Tibial artery (tissue), 4 donors: ENCODE measurements at regions of chr20 and their contacts with region 1.

Region 1: GRCh38 chr20:9616833-9617489 is 102.6 kb downstream of the LAMP5 start:
- DNase-seq: peak in 1 of 2 donors; percentile 37
- H3K4me3 ChIP-seq: no peak overlapping the region
- H3K27ac ChIP-seq: no peak overlapping the region
- H3K4me1 ChIP-seq: peaks cover 0 to 5% (median 2%) of the 10 kb centered on the region in 4 donors
- H3K27me3 ChIP-seq: peaks cover 0 to 4% of the 10 kb centered on the region in 2 donors
- CTCF ChIP-seq: peak; percentile 74 to 81

Region 2: DNA sequence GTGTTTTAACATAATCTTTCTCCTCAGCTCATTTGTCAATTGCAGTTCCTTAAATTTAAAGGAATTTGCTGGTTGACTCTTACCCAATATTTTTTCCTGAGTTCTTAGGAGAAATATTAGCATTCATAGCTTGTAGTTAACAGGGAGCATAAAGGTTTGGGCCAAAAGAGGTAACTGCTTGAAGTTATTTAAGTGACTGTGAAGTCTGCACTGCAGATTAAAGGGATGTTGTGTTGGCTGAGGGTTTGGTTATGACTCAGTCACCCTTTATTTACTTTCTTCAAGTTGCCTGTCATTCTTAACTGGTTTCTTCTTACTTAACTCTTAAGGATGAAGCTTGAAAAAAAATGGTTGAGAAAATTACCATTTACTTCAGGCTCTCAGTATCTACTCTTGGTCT is 322.9 kb before region 1 on chr20:
- intact Hi-C with region 1: no loop called
- DNase-seq: no peak
- H3K4me3 ChIP-seq: no peak overlapping the region
- H3K27ac ChIP-seq: no peak overlapping the region
- H3K4me1 ChIP-seq: peaks cover 0 to 12% (median 0%) of the 10 kb centered on the region in 4 donors
- H3K27me3 ChIP-seq: no peaks in the 10 kb centered on the region
- CTCF ChIP-seq: no peak

Region 3: GRCh38 chr20:9532069-9532838 is 84.7 kb before region 1 on chr20:
- intact Hi-C with region 1: no loop called
- DNase-seq: no peak
- H3K4me3 ChIP-seq: no peak overlapping the region
- H3K27ac ChIP-seq: no peak overlapping the region
- H3K4me1 ChIP-seq: no peaks in the 10 kb centered on the region
- H3K27me3 ChIP-seq: no peaks in the 10 kb centered on the region
- CTCF ChIP-seq: no peak

Region 4: DNA sequence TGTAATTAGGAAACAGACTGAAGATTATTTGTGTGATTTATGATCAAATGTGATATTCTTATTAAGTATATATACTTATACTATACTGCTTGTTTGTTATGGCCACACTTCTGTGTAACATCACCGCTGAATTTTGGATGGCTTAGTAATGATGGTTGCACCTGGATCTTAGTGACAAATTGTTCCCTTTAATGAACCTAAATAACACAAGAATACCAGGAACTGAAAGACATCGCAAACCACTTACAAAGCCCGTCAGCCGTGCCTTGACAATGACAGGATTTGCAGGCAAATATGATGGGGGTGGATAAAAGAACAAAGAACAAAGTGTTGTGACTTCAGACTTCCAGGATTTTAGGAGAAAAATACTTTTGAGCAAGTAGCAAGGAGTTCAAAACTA is 35.5 kb before region 1 on chr20:
- intact Hi-C with region 1: no loop called
- DNase-seq: no peak
- H3K4me3 ChIP-seq: no peak overlapping the region
- H3K27ac ChIP-seq: no peak overlapping the region
- H3K4me1 ChIP-seq: no peaks in the 10 kb centered on the region
- H3K27me3 ChIP-seq: no peaks in the 10 kb centered on the region
- CTCF ChIP-seq: no peak

Region 5: DNA sequence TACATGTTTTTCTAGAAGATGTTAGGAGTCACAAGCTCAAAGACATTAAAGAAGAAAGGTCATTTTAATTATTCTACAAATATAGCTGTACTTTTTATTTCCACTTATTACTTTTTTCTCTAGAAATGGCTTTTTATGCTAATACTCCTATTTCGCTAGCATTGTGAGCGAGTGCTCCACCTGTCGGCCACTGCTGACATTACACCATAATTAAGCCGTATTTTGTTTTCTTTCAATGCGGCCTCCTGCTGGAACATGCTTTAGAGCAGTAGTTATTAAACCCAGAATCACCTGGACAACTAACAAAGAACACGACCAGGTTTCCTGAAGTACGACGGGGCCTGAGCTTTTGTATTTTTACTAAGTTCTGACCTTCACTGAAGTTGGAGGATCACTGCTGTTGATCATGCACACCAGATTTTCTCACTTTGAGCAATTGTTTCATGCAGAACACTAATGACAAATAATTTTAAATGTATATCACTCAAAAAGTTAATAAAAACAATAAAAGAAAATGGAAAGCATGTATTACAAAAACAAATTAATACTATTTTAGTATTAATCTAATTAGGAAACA is 296.0 kb after region 1 on chr20:
- intact Hi-C with region 1: loop called (anchors 2 kb)
- DNase-seq: peak in 1 of 2 donors; percentile 32
- H3K4me3 ChIP-seq: no peak overlapping the region
- H3K27ac ChIP-seq: no peak overlapping the region
- H3K4me1 ChIP-seq: no peaks in the 10 kb centered on the region
- H3K27me3 ChIP-seq: peaks cover 0 to 5% of the 10 kb centered on the region in 2 donors
- CTCF ChIP-seq: peak; percentile 55 to 74

Region 6: DNA sequence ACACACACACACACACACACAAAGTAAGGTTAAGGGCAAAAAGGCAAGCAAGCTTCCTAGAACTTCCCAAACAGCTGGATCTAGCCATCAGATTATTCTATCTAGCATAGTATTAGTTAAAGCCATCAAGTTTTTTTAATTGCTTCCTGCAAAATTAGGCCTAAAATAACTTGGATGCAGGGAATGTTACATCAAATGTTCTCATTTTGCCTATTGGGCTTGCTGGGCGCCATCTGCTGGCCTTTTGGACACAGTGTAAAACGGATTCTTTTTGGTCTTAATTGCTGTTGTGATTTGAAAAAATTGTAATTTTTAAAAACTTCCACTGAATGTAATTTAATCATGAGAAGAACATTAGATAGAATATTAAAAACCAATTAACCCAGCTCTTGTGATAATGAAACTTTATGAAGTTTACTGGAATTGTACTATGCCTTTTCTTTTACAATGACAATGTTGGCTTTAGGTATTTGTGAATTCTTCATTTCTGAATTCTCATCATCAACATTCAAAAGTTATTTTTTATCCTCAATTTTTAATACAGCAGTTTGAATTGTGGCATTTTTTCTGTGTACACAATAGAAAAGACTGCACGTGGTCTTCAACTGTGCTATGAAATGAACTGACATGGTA is 810.2 kb after region 1 on chr20:
- intact Hi-C with region 1: loop called (anchors 5 kb)
- DNase-seq: peak in 1 of 2 donors; percentile 51
- H3K4me3 ChIP-seq: no peak overlapping the region
- H3K27ac ChIP-seq: no peak overlapping the region
- H3K4me1 ChIP-seq: peaks cover 0 to 20% (median 4%) of the 10 kb centered on the region in 4 donors
- H3K27me3 ChIP-seq: no peaks in the 10 kb centered on the region
- CTCF ChIP-seq: peak; percentile 73 to 80